ENCODE measurements at regions of chr11 and their contacts with region 1.

Region 1: GRCh38 chr11:14249121-14249963 is 109.6 kb downstream of the RRAS2 start:
- DNase-seq: peak; percentile 33 to 68
- H3K4me3 ChIP-seq: no peak overlapping the region
- H3K27ac ChIP-seq: no peak overlapping the region
- H3K4me1 ChIP-seq: peaks cover 0 to 4% of the 10 kb centered on the region in 2 donors
- H3K27me3 ChIP-seq: no peaks in the 10 kb centered on the region
- CTCF ChIP-seq: peak; percentile 44 to 87 (median 83)
- POLR2A ChIP-seq: no peak

Region 2: DNA sequence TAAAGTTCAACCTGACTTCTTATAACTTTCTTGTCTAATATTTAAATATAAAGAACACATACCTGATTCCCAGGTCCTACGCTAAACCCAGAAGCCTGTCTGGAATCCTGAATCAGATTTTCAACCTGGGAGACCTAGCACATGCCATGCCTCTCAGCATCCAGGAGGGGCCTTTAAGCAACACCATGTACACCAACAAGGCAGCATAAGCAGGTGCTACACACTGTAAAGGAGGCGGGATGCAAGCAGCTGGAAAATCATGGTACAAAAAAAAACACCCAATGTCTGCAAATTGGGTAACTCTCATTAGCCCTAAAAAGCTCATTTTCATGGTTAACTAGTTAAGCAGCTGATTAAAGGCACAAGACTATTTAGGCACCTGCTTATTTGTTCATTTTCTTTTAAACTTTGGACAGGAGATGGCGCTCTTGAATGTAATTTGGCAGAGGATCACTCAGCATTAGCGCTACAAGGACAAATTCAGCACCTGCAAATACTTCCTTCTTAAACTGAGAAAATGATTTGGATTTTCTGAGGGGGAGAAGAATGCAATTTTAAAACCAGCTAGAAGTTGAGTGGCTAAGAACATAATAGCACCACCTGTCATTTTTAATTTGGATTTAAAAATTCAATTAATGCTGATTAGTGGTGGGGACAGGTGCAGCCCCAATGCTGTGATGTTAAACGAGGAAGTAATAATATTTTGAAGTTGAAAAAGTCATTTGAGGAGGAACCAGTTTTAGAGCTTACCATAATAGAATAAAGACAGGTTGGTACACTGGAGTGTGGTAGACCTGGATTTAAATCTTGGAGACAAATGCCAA is 476.9 kb before region 1 on chr11:
- intact Hi-C with region 1: loop called (anchors 10 kb)
- DNase-seq: peak in 1 of 2 donors; percentile 3
- H3K4me3 ChIP-seq: no peak overlapping the region
- H3K27ac ChIP-seq: no peak overlapping the region
- H3K4me1 ChIP-seq: no peaks in the 10 kb centered on the region
- H3K27me3 ChIP-seq: no peaks in the 10 kb centered on the region
- CTCF ChIP-seq: peak in 3 of 6 experiments; percentile 40 to 45 (median 45)
- POLR2A ChIP-seq: no peak

Region 3: DNA sequence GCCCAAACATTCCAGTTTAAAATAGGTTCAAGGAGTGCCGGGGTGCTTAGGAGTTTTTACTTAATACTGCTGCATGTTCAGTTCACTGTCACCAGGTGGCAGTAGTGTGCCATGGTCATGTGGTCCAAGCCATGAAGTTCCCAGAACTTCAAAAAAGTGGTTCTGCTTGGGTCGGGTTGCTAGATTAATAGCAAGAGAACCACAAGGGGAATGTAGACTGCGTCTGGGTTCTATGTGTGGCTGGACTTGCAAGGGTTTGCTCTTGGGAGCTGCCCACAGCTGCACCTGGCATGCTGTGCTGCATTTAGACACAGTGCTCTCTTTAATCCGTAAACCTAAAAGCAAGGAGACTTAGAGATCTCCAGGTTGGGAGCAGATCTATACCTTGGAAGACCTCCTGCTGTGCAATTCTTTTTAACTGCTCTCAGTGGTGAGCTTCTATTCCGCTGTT is 293.3 kb before region 1 on chr11:
- intact Hi-C with region 1: loop called (anchors 2 kb)
- DNase-seq: peak; percentile 64 to 69
- H3K4me3 ChIP-seq: no peak overlapping the region
- H3K27ac ChIP-seq: no peak overlapping the region
- H3K4me1 ChIP-seq: no peaks in the 10 kb centered on the region
- H3K27me3 ChIP-seq: no peaks in the 10 kb centered on the region
- CTCF ChIP-seq: peak; percentile 50 to 89 (median 82)
- POLR2A ChIP-seq: no peak